ENCODE measurements at regions of chrX and their contacts with region 1.

Region 1: DNA sequence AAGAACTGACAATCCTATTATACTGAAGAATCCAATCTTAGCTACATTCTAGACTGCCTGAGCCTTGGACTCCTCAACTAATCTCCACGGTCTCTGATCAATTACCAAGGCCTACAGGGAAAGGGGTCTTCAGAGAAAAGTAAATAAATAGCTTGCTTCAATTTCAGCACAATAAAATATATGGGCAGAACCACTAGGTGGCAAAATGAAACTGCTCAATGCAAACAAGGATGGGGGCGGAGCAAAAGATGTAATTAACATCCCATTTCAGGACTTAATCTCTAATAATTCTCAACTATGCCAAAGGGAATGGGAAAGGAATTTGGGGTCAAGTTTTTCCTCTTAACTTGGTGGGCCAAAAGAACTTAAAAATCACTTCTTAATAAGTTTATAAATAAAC is 78.4 kb upstream of the MAP3K15 start:
- DNase-seq: peak in 1 of 2 donors; percentile 25
- ATAC-seq: peak in 3 of 8 donors; percentile 55 to 73 (median 58)
- H3K4me3 ChIP-seq: no peak overlapping the region
- H3K27ac ChIP-seq: no peak overlapping the region
- H3K4me1 ChIP-seq: peaks cover 0 to 22% (median 8%) of the 10 kb centered on the region in 9 donors
- H3K27me3 ChIP-seq: no peaks in the 10 kb centered on the region
- CTCF ChIP-seq: peak; percentile 19 to 64 (median 53)

Region 2: DNA sequence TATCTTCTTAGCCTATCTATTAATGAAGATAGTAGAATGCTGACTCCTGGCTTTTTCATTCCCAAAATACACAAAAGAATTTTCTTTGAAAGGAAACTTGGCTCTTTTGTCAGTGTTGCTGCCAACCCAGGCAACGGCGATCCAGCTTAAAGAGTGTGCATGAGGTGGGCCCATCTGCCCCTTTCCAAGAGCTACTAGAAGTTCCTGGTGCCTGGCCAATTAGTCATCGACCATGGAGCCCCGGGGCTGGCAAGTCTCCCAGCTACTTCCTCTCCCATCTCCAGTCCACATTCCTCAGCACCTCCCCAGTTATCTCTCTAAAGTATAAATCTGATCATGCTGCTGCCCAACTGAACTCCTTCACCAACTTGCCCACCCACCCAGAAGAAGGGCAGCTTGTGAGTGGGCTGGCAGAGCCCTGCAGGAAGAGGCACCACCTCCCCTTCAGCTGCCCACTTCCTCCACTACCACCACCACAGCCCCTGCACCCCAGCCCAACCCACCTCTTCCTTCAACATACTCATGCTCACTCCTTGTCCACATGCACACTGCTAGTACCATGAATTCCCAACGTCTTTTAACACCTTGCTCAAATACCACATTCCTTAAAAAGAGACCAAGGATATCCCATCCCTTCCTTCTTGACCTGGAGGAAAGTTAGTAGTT is 79.8 kb after region 1 on chrX:
- intact Hi-C with region 1: loop called in 1 of 10 experiments (anchors 10 kb)
- DNase-seq: peak; percentile 53 to 64
- ATAC-seq: peak; percentile 20 to 86 (median 66)
- H3K4me3 ChIP-seq: no peak overlapping the region
- H3K27ac ChIP-seq: peak overlapping the region in 1 of 10 donors; percentile 21
- H3K4me1 ChIP-seq: peaks cover 0 to 37% (median 5%) of the 10 kb centered on the region in 9 donors
- H3K27me3 ChIP-seq: no peaks in the 10 kb centered on the region
- CTCF ChIP-seq: no peak

Region 3: DNA sequence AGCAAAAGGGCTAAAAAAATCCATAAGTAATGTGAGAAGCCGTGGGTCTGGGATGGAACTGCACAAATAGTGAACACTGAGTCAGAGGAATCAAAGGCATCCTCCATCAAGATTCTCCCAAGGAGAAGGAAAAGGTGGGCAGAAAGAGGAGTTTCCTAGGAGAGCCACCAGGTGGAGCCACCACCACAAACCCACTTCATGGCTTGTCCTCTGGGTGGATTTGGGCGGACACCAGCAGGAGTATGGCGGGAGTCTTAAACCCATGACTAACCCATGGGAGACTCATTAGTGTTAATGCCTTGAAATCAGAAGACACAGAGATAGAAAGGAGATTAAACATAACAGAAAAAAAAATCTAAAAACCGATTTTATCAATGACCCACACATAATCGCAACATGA is 146.0 kb after region 1 on chrX:
- intact Hi-C with region 1: loop called in 7 of 10 experiments (anchors 5 to 10 kb)
- DNase-seq: peak; percentile 48 to 49
- ATAC-seq: peak in 6 of 8 donors; percentile 52 to 86 (median 69)
- H3K4me3 ChIP-seq: no peak overlapping the region
- H3K27ac ChIP-seq: no peak overlapping the region
- H3K4me1 ChIP-seq: peaks cover 0 to 9% (median 0%) of the 10 kb centered on the region in 9 donors
- H3K27me3 ChIP-seq: peaks cover 0 to 3% (median 0%) of the 10 kb centered on the region in 7 donors
- CTCF ChIP-seq: peak; percentile 28 to 74 (median 64)

Region 4: GRCh38 chrX:19990556-19991349 is 397.1 kb after region 1 on chrX and contains the start of gene BCLAF3:
- intact Hi-C with region 1: loop called in 1 of 10 experiments (anchors 2 kb)
- DNase-seq: peak; percentile 86 to 91
- ATAC-seq: peak; percentile 97 to 100 (median 100)
- H3K4me3 ChIP-seq: peak within 1 kb of the TSS; percentile 50 to 89 (median 77)
- H3K27ac ChIP-seq: peak within 1 kb of the TSS in 9 of 10 donors; percentile 60 to 78 (median 73)
- H3K4me1 ChIP-seq: peaks cover 0 to 13% (median 0%) of the 10 kb centered on the region in 9 donors
- H3K27me3 ChIP-seq: peaks cover 0 to under 1% (median 0%) of the 10 kb centered on the region in 7 donors
- CTCF ChIP-seq: peak; percentile 57 to 89 (median 80)
- total RNA-seq, gene BCLAF3: 5.5 to 10.2 (median 8.7) TPM